Tibial artery (tissue), 4 donors: ENCODE measurements at regions of chr1 and their contacts with region 1.

Region 1: DNA sequence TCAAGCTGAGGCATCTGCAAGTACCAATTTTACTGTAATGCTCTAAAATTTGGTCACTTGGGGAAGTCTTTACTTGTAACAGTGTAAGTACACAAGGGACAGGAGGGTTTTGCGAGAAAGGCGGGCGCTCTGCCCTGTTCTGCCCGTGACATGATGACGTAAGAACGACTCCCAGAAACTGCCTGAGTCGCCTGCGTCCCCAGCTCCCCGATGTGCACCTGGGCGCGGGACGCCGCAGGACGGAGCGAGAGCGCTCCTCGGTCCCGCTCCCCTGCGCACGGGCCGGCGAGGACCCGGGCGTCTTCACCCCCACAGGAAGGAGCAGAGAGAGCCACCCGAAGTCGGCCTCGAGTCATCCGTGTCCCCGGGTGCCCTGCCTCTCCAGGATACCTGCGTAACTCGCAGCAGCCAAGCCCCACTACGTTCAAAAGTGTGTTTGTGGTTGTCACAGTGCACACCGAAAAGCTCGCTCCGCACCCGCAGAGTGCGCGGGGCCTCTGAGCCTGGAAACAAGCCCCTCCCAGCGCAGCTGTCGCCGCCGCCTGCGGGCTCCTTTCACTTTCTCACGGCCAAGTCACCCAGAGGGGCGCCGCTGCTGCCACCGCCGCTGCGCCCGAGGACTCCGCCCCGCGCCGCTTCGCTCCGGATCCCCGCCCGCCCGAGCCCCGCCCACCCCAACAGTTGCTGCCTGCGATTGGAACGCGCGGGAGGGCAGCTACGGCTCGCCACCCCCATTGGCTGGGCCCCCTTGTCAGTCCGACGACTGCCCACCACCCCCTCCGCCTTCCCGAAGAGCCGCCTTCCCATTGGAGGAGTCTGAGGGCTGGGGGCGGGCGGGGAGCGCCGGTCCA is 3.2 kb upstream of the ZBTB18 start:
- DNase-seq: peak; percentile 98 to 100
- H3K4me3 ChIP-seq: peak overlapping the region; percentile 65 to 94
- H3K27ac ChIP-seq: peak overlapping the region; percentile 95 to 98
- H3K4me1 ChIP-seq: peaks cover 0 to 28% (median 2%) of the 10 kb centered on the region in 4 donors
- H3K27me3 ChIP-seq: no peaks in the 10 kb centered on the region
- CTCF ChIP-seq: no peak

Region 2: DNA sequence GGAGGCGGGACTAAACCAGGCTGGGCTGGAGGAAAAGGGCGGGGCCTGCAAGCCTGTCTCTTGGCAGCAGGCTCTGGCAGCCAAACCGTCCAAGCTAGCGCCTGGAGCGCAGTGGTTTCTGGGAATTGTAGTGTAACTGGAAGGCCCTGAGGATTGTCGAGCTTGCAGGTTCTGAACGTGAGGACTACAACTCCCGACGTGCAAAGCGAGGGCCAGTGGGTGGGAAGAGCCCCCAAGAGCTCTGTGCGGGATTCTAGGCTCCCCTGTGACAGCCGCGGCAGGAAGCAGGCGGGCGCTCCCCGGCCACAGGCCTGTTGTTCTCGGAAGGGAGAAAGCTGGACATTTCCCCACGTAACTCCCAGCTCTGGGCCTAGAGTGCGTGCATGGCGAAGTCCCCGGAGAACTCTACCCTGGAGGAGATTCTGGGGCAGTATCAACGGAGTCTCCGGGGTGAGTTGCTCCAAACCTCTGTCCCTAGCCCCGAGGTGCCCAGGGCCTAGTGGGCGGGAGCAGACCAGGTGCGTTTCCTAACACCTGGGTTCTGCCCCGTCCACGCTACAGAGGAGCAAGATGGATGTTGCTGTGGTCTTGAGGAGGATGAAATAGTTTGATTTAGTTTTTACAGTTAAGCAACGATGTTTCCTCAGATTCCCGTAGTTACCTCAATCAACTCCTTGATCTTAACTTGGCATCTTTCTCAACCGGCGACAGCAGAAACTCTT is 791.9 kb before region 1 on chr1 and contains the start of gene SDCCAG8:
- intact Hi-C with region 1: loop called (anchors 5 kb)
- DNase-seq: peak; percentile 99
- H3K4me3 ChIP-seq: peak within 1 kb of the TSS; percentile 89 to 97
- H3K27ac ChIP-seq: peak within 1 kb of the TSS; percentile 97 to 98
- H3K4me1 ChIP-seq: peaks cover 0 to 48% (median 17%) of the 10 kb centered on the region in 4 donors
- H3K27me3 ChIP-seq: no peaks in the 10 kb centered on the region
- CTCF ChIP-seq: no peak

Region 3: GRCh38 chr1:243742819-243743218 is 305.0 kb before region 1 on chr1:
- intact Hi-C with region 1: no loop called
- DNase-seq: no peak
- H3K4me3 ChIP-seq: no peak overlapping the region
- H3K27ac ChIP-seq: peak overlapping the region; percentile 25 to 38
- H3K4me1 ChIP-seq: peaks cover 0 to 67% (median 19%) of the 10 kb centered on the region in 4 donors
- H3K27me3 ChIP-seq: no peaks in the 10 kb centered on the region
- CTCF ChIP-seq: no peak

Region 4: DNA sequence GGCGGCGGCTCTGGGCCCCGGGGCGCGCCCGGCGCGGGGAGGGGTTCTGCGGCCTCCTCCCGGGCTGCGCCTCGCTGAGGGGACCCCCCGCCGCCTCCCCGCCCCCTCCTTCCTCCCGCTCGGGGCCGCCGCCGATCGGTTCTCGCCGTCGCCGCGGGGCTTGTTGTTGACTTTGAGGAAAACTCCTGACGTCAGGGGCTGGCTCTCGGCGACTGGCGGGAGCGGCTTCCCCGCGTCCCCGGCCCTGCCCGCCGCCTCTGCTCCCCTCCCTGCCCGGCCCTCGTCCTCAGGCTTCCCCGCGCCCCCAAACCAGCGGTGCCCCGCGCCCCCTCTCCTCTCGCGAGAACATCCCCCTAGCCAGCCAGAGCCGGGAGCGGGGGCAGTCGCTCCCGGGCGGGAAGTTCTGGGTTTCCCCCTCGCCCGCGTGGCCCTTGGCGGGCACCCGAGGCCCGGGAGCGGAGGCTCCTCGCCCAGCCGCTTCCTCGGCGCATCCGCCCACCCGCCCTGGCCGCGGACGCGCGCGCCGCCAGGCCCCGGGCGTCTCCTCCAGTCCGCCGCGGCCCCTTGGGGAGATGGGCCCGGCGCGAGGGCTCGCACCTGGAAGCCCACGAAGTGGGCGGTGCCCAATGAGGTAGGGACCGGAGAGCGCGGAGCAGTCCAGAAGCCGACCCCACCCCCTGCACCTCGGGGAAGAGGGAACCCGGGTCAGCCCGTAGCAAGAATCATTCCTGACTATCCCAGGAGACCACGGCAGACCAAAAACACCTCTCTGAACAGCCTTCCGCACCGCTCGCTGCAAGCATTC is 197.2 kb before region 1 on chr1:
- intact Hi-C with region 1: loop called (anchors 5 kb)
- DNase-seq: peak; percentile 52 to 89
- H3K4me3 ChIP-seq: peak overlapping the region; percentile 90 to 93
- H3K27ac ChIP-seq: peak overlapping the region; percentile 98 to 99
- H3K4me1 ChIP-seq: peaks cover 0 to 35% (median 3%) of the 10 kb centered on the region in 4 donors
- H3K27me3 ChIP-seq: no peaks in the 10 kb centered on the region
- CTCF ChIP-seq: no peak

Region 5: DNA sequence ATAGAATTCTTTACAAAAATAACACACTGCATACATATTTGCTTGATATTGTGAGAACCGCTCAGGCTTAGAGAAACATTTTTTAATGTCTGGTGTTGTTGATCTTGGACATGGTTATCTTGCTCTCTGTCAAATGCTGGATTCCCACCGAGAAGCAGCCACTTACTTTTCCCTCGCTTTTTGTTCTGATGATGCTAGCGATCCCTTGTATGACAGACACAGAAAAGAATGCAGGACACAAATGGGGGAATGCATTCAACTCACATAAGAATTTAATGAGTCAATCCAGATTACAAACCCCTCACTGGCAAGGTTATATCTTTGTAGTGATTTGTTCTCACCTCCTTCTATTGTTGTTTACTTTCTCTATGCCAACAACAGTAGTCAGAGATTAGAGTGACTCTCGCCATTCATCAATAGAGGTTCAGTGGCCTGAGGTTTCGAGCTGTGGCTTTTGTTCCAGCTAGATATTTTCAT is 121.0 kb before region 1 on chr1:
- intact Hi-C with region 1: loop called (anchors 10 kb)
- DNase-seq: no peak
- H3K4me3 ChIP-seq: peak overlapping the region; percentile 9 to 14
- H3K27ac ChIP-seq: peak overlapping the region in 1 of 2 donors; percentile 54
- H3K4me1 ChIP-seq: peaks cover 0 to 61% (median 40%) of the 10 kb centered on the region in 4 donors
- H3K27me3 ChIP-seq: no peaks in the 10 kb centered on the region
- CTCF ChIP-seq: no peak

Region 6: DNA sequence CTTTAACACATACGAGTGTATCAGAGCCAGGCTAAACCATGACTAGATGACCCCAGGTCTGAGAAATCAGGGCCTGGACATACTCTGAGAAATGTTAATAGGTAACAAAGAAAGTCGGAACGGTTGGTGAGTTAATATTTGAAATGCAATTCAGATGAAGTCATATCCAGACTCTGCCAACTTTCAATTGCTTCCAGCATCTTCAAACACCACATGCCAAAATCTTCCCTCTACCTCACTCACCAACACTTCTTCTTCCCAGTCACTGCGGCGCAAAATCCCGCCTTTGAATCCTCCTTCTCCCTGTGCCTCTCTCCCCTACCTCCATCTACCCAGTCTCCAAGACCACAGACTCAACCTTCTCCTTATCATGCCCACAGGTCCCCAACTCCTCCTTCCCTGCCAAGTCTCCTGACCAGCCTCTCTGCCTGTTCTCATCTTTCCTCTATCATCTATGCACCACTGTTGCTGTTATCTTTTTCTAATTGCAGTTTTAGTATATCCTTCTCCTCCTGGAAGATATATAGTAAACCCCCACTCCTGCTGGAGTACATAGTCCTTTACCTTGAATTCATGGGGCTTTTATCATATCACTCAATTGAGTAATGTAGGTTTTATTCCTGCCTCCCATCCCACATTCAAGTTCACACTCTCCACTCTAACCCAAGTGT is 44.6 kb after region 1 on chr1:
- intact Hi-C with region 1: no loop called
- DNase-seq: no peak
- H3K4me3 ChIP-seq: no peak overlapping the region
- H3K27ac ChIP-seq: no peak overlapping the region
- H3K4me1 ChIP-seq: peaks cover 0 to 3% (median 0%) of the 10 kb centered on the region in 4 donors
- H3K27me3 ChIP-seq: no peaks in the 10 kb centered on the region
- CTCF ChIP-seq: no peak

Region 7: GRCh38 chr1:244272471-244273261 is 224.8 kb after region 1 on chr1:
- intact Hi-C with region 1: loop called (anchors 10 kb)
- DNase-seq: peak; percentile 60 to 84
- H3K4me3 ChIP-seq: no peak overlapping the region
- H3K27ac ChIP-seq: peak overlapping the region; percentile 64 to 78
- H3K4me1 ChIP-seq: peaks cover 0 to 23% (median 11%) of the 10 kb centered on the region in 4 donors
- H3K27me3 ChIP-seq: no peaks in the 10 kb centered on the region
- CTCF ChIP-seq: peak; percentile 89 to 97

Region 8: GRCh38 chr1:244451951-244452795 is 404.3 kb after region 1 on chr1:
- intact Hi-C with region 1: loop called (anchors 5 kb)
- DNase-seq: peak; percentile 99 to 100
- H3K4me3 ChIP-seq: peak overlapping the region; percentile 84 to 96
- H3K27ac ChIP-seq: peak overlapping the region; percentile 92 to 98
- H3K4me1 ChIP-seq: peaks cover 0 to 38% (median 22%) of the 10 kb centered on the region in 4 donors
- H3K27me3 ChIP-seq: no peaks in the 10 kb centered on the region
- CTCF ChIP-seq: peak; percentile 46 to 53